GM10248 (cell line): ENCODE measurements at regions of chr12 and their contacts with region 1.

Region 1: DNA sequence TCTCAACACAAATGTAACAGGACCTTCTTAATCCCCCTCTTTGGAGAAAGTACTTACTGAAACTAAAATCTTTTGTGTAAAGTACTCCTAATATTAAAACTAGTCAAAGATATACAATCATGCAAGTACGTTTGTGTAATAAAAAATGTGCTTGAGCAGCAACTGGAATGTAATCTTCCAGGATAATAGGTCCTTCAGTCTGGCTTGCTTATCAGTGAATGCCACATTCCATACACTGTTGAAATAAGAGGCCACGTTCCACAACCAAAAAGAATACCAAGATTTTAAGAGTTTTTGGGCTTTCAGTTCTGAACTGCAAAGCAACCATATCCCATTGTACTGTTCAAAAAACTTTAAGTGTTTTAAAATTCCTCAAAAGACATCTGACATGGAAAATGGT is 26.2 kb upstream of the GRIN2B start:
- DNase-seq: no peak
- CTCF ChIP-seq: no peak

Region 2: GRCh38 chr12:14024591-14024990 is 17.0 kb after region 1 on chr12:
- CTCF ChIA-PET with region 1: interaction called, 3 read pairs
- POLR2A ChIA-PET with region 1: interaction called, 11 read pairs
- DNase-seq: no peak
- CTCF ChIP-seq: no peak